ENCODE measurements at regions of chr6 and their contacts with region 1.

Region 1: GRCh38 chr6:45608252-45608911 is 230.6 kb upstream of the SUPT3H start:
- DNase-seq: no peak
- H3K4me3 Mint-ChIP-seq: no peak overlapping the region
- H3K27ac Mint-ChIP-seq: peak overlapping the region; percentile 58
- H3K4me1 Mint-ChIP-seq: peaks cover 40% of the 10 kb centered on the region
- H3K27me3 Mint-ChIP-seq: no peaks in the 10 kb centered on the region

Region 2: GRCh38 chr6:45595010-45595851 is 13.2 kb before region 1 on chr6:
- CTCF ChIA-PET with region 1: interaction called, 3 read pairs
- POLR2A ChIA-PET with region 1: interaction called, 11 read pairs
- DNase-seq: no peak
- H3K4me3 Mint-ChIP-seq: no peak overlapping the region
- H3K27ac Mint-ChIP-seq: peak overlapping the region; percentile 69
- H3K4me1 Mint-ChIP-seq: peaks cover 65% of the 10 kb centered on the region
- H3K27me3 Mint-ChIP-seq: no peaks in the 10 kb centered on the region